ENCODE measurements at regions of chr9 and their contacts with region 1.

Region 1: DNA sequence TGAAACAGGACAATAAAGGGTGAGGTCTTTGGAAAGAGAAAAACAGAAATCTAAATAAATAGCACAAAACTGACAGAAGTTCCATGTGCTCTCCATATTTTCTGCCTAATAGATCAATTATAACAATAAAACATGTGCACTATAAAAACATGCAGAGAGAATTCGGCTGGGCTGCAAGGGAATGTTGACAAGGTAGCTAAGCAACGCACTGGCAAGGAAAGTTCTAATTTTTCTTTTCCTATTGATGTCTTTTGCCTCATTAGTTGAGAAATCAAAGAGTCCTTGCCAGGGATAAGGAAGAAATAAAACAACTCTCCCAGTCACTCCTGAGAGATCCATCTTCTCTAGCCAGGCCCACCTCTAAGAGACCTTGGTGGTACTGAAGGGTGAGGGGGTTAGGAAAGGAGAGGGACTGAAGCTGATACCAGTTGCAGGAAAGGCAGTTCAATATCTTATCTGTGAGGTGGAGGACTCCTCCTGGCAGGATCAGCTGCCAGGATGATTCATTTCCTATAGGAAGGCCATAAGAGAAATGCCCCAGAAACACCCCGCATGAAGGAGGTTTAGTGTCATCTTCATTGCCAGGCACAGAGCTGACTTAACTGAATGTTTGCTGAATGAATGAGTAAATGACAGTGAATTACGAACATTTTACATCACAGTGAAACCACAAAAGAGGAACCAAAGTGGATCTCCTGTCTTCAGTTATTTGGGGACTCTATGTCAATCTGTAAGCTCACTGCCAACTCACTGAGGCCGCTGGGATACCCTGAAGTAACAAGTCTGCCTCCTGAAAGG is 63.7 kb upstream of the IFNK start:
- DNase-seq: peak; percentile 84
- ATAC-seq: peak; percentile 93
- H3K4me3 ChIP-seq: no peak overlapping the region
- H3K4me3 Mint-ChIP-seq: peak overlapping the region; percentile 65
- H3K27ac ChIP-seq: peak overlapping the region in 1 of 2 donors; percentile 15
- H3K27ac Mint-ChIP-seq: peak overlapping the region; percentile 80
- H3K4me1 ChIP-seq: peaks cover 31 to 41% of the 10 kb centered on the region in 2 donors
- H3K4me1 Mint-ChIP-seq: peaks cover 55% of the 10 kb centered on the region
- H3K27me3 ChIP-seq: no peaks in the 10 kb centered on the region
- H3K27me3 Mint-ChIP-seq: no peaks in the 10 kb centered on the region
- CTCF ChIP-seq: no peak

Region 2: GRCh38 chr9:27353474-27354229 is 106.8 kb before region 1 on chr9:
- CTCF ChIA-PET with region 1: no interaction called
- POLR2A ChIA-PET with region 1: no interaction called
- intact Hi-C with region 1: loop called (anchors 5 kb)
- DNase-seq: peak; percentile 48
- ATAC-seq: peak; percentile 68
- H3K4me3 ChIP-seq: no peak overlapping the region
- H3K4me3 Mint-ChIP-seq: no peak overlapping the region
- H3K27ac ChIP-seq: peak overlapping the region; percentile 0 to 58
- H3K27ac Mint-ChIP-seq: peak overlapping the region; percentile 84
- H3K4me1 ChIP-seq: peaks cover 31 to 34% of the 10 kb centered on the region in 2 donors
- H3K4me1 Mint-ChIP-seq: peaks cover 54% of the 10 kb centered on the region
- H3K27me3 ChIP-seq: no peaks in the 10 kb centered on the region
- H3K27me3 Mint-ChIP-seq: no peaks in the 10 kb centered on the region
- CTCF ChIP-seq: peak; percentile 16

Region 3: DNA sequence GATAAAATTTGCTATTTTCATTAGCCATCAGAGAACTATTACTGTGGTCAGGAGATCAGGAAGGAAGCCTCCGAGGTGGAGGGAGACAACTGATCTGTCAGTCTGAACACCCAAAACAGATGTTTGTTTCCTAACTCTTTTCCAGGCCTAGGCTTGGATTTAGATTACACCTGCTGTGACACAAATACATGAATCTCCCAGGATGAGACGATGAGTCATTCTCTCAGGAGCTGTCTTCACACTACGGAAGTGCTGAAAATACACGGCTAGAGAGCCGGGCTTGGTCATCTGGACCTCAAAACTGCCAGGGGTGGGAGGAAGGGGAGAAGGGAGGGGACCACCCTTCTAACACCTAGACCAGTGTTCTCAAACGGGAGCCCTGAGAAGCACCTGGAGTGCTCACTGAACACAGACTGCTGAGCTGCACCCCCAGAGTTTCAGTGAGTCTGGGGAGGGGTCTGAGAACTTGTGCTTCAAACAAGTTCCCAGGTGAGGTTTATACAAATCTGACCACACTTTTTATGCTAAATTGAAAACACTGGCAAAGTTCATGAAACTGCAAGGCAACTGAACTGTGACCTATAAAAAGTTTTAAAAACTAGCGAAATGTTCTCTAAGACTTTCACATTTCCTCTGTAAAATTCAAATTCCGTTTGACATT is 83.1 kb before region 1 on chr9:
- CTCF ChIA-PET with region 1: interaction called, 5 read pairs
- POLR2A ChIA-PET with region 1: no interaction called
- intact Hi-C with region 1: loop called (anchors 2 kb)
- DNase-seq: no peak
- ATAC-seq: no peak
- H3K4me3 ChIP-seq: peak overlapping the region in 4 of 5 experiments; percentile 8 to 51 (median 28)
- H3K4me3 Mint-ChIP-seq: peak overlapping the region; percentile 74
- H3K27ac ChIP-seq: peak overlapping the region; percentile 81 to 85
- H3K27ac Mint-ChIP-seq: peak overlapping the region; percentile 85
- H3K4me1 ChIP-seq: peaks cover 64 to 72% of the 10 kb centered on the region in 2 donors
- H3K4me1 Mint-ChIP-seq: peaks cover 68% of the 10 kb centered on the region
- H3K27me3 ChIP-seq: no peaks in the 10 kb centered on the region
- H3K27me3 Mint-ChIP-seq: no peaks in the 10 kb centered on the region
- CTCF ChIP-seq: no peak

Region 4: DNA sequence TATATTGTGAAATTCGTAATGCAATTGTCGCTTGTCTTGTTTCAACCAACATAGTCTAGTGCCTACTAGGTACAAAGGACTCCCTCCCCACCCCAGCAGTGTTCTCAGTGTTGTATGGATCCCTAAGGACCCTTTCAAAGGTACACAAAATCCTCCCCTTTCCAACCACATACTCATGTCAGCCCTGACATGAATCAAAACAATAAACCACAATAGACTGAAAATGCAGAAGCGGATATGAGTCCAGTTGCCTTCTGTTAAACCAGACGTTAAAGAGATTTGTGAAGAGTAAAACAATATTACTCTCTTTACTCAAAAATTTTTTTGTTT is 18.7 kb before region 1 on chr9:
- CTCF ChIA-PET with region 1: interaction called, 7 read pairs
- POLR2A ChIA-PET with region 1: interaction called, 3 read pairs
- intact Hi-C with region 1: loop called (anchors 2 kb)
- DNase-seq: peak; percentile 51
- ATAC-seq: peak; percentile 95
- H3K4me3 ChIP-seq: peak overlapping the region in 1 of 5 experiments; percentile 21
- H3K4me3 Mint-ChIP-seq: peak overlapping the region; percentile 70
- H3K27ac ChIP-seq: peak overlapping the region; percentile 15 to 42
- H3K27ac Mint-ChIP-seq: peak overlapping the region; percentile 87
- H3K4me1 ChIP-seq: peaks cover 50 to 53% of the 10 kb centered on the region in 2 donors
- H3K4me1 Mint-ChIP-seq: peaks cover 70% of the 10 kb centered on the region
- H3K27me3 ChIP-seq: no peaks in the 10 kb centered on the region
- H3K27me3 Mint-ChIP-seq: no peaks in the 10 kb centered on the region
- CTCF ChIP-seq: no peak

Region 5: DNA sequence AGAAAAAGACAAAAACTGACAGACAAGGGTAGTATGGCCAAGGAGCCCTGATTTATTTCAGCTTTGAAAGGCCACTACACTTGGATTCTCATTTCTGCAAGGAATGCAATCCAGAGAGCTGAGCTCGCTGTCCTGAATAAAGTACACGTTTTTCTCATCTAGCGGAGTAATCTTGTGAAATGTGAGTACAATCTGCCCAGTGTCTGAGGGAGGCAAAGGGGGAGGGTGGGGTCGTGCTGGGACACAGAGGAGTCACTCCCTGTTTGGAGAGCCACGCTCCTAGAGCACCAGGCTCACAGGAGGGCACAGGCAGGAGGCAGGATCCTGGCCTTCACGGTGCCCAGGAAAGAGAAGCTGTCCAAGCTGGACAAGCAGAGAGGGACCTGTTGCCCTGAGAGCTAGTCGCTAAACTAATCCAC is 12.7 kb after region 1 on chr9:
- CTCF ChIA-PET with region 1: interaction called, 11 read pairs
- POLR2A ChIA-PET with region 1: interaction called, 6 read pairs
- intact Hi-C with region 1: no loop called
- DNase-seq: no peak
- ATAC-seq: no peak
- H3K4me3 ChIP-seq: no peak overlapping the region
- H3K4me3 Mint-ChIP-seq: no peak overlapping the region
- H3K27ac ChIP-seq: no peak overlapping the region
- H3K27ac Mint-ChIP-seq: no peak overlapping the region
- H3K4me1 ChIP-seq: peaks cover 51 to 54% of the 10 kb centered on the region in 2 donors
- H3K4me1 Mint-ChIP-seq: peaks cover 81% of the 10 kb centered on the region
- H3K27me3 ChIP-seq: no peaks in the 10 kb centered on the region
- H3K27me3 Mint-ChIP-seq: no peaks in the 10 kb centered on the region
- CTCF ChIP-seq: no peak

Region 6: DNA sequence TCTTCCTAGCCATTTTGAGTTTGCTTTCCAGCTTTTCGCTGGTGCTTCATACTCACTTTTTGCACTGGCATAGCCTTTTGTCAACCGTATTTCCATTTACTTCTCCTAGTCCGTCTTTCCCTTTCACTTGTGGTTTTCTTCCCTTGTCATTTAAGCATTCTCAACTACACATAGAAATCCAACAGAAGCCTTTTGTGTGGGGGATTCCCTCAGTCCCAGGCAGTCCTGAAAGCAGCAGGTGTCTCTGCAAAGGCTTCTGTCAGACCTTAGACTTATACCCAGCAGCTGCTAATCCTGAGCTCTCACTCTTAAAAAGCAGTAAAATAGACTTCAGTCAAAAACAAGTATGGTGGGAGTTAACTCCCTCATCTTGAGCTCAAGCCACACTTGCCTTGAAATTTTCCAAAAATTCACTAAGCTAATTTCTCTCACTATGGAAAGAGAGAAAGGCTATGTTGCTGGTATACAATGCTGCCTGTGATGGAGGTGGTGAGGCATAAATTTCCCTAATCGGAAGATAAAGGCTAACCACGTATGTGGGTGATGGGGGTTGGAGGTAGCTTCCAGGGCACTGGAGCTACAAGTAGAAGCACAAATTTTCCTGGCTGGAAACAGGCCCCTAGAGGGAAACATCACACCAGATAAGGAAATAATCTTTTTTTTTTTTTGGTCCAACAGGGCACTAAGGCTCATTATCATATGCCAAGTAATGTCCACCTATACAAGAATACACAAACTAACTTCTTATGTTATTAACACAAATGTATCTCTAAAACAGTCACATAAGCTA is 28.9 kb after region 1 on chr9:
- CTCF ChIA-PET with region 1: interaction called, 6 read pairs
- POLR2A ChIA-PET with region 1: interaction called, 8 read pairs
- intact Hi-C with region 1: loop called (anchors 2 kb)
- DNase-seq: peak; percentile 36
- ATAC-seq: no peak
- H3K4me3 ChIP-seq: no peak overlapping the region
- H3K4me3 Mint-ChIP-seq: peak overlapping the region; percentile 63
- H3K27ac ChIP-seq: peak overlapping the region; percentile 28 to 60
- H3K27ac Mint-ChIP-seq: peak overlapping the region; percentile 72
- H3K4me1 ChIP-seq: peaks cover 74 to 83% of the 10 kb centered on the region in 2 donors
- H3K4me1 Mint-ChIP-seq: peaks cover 76% of the 10 kb centered on the region
- H3K27me3 ChIP-seq: no peaks in the 10 kb centered on the region
- H3K27me3 Mint-ChIP-seq: no peaks in the 10 kb centered on the region
- CTCF ChIP-seq: no peak

Measured in B cell (primary cell).